ENCODE measurements at regions of chr10 and their contacts with region 1.

Region 1: DNA sequence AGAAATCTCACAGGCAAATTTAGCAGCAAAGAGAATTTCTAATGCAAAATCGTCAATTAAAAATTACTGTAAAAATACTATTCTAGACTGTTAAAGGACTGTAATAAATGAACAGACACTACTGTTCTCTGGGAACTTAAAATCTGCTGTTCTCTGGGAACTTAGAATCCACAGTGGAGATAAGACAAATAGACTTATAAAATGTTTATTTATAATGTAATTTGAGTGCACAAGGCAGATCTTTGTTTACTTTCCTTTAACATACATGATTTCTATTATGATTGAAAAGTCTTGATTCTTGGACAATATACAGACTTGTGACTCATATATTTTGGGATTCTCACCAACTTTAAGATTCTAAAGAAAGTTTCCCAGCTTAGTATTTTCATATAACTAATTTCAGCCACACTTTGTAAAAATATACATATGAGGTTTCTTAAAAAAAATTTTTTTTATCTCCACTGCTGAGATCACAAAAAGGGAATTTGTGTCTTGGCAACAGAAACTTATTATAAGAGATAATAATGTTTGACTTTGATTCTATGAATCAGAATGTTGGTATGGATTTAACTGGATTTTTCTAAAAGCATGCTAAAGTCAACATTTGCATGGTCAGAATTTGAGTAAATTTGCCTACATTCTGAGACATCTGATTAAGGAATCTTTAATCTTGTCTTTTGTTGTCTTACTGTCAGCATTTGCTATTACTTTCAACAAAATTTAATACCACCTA is 166.4 kb upstream of the RHOBTB1 start:
- DNase-seq: peak; percentile 92
- ATAC-seq: peak; percentile 79
- H3K4me3 ChIP-seq: 0 out of 2 replicates have a peak overlapping the region, but pooled peaks have one; percentile 3
- H3K27ac ChIP-seq: peak overlapping the region; percentile 63
- H3K4me1 ChIP-seq: peaks cover 24% of the 10 kb centered on the region
- H3K27me3 ChIP-seq: no peaks in the 10 kb centered on the region
- CTCF ChIP-seq: no peak

Region 2: GRCh38 chr10:60978287-60979115 is 131.9 kb before region 1 on chr10:
- CTCF ChIA-PET with region 1: no interaction called
- POLR2A ChIA-PET with region 1: no interaction called
- intact Hi-C with region 1: loop called (anchors 2 kb)
- DNase-seq: peak; percentile 99
- ATAC-seq: peak; percentile 64
- H3K4me3 ChIP-seq: no peak overlapping the region
- H3K27ac ChIP-seq: peak overlapping the region; percentile 32
- H3K4me1 ChIP-seq: peaks cover 67% of the 10 kb centered on the region
- H3K27me3 ChIP-seq: no peaks in the 10 kb centered on the region
- CTCF ChIP-seq: no peak

Region 3: GRCh38 chr10:61164458-61165160 is 54.3 kb after region 1 on chr10:
- CTCF ChIA-PET with region 1: no interaction called
- POLR2A ChIA-PET with region 1: no interaction called
- intact Hi-C with region 1: loop called (anchors 2 kb)
- DNase-seq: peak; percentile 88
- ATAC-seq: peak; percentile 80
- H3K4me3 ChIP-seq: no peak overlapping the region
- H3K27ac ChIP-seq: no peak overlapping the region
- H3K4me1 ChIP-seq: peaks cover 8% of the 10 kb centered on the region; the same call in 1 of the 2 replicates
- H3K27me3 ChIP-seq: no peaks in the 10 kb centered on the region
- CTCF ChIP-seq: no peak

Region 4: GRCh38 chr10:61313460-61313859 is 203.1 kb after region 1 on chr10:
- CTCF ChIA-PET with region 1: no interaction called
- POLR2A ChIA-PET with region 1: no interaction called
- intact Hi-C with region 1: no loop called
- DNase-seq: no peak
- ATAC-seq: no peak
- H3K4me3 ChIP-seq: no peak overlapping the region
- H3K27ac ChIP-seq: no peak overlapping the region
- H3K4me1 ChIP-seq: no peaks in the 10 kb centered on the region
- H3K27me3 ChIP-seq: no peaks in the 10 kb centered on the region
- CTCF ChIP-seq: no peak